CD4-positive, alpha-beta T cell (primary cell): ENCODE measurements at regions of chr6 and their contacts with region 1.

Region 1: GRCh38 chr6:108541838-108542759 is 18.6 kb upstream of the FOXO3 start:
- DNase-seq: peak; percentile 56 to 88 (median 61)
- ATAC-seq: peak; percentile 91
- H3K4me3 ChIP-seq: no peak overlapping the region
- H3K4me3 Mint-ChIP-seq: no peak overlapping the region
- H3K27ac ChIP-seq: no peak overlapping the region
- H3K27ac Mint-ChIP-seq: no peak overlapping the region
- H3K4me1 ChIP-seq: peaks cover 12% of the 10 kb centered on the region
- H3K4me1 Mint-ChIP-seq: peaks cover 7% of the 10 kb centered on the region
- H3K27me3 ChIP-seq: no peaks in the 10 kb centered on the region
- H3K27me3 Mint-ChIP-seq: peaks cover 5% of the 10 kb centered on the region
- CTCF ChIP-seq: peak; percentile 89

Region 2: GRCh38 chr6:108484016-108484415 is 58.1 kb before region 1 on chr6:
- CTCF ChIA-PET with region 1: no interaction called
- POLR2A ChIA-PET with region 1: no interaction called
- intact Hi-C with region 1: no loop called
- DNase-seq: no peak
- ATAC-seq: no peak
- H3K4me3 ChIP-seq: no peak overlapping the region
- H3K4me3 Mint-ChIP-seq: no peak overlapping the region
- H3K27ac ChIP-seq: no peak overlapping the region
- H3K27ac Mint-ChIP-seq: no peak overlapping the region
- H3K4me1 ChIP-seq: no peaks in the 10 kb centered on the region
- H3K4me1 Mint-ChIP-seq: no peaks in the 10 kb centered on the region
- H3K27me3 ChIP-seq: no peaks in the 10 kb centered on the region
- H3K27me3 Mint-ChIP-seq: no peaks in the 10 kb centered on the region
- CTCF ChIP-seq: no peak

Region 3: DNA sequence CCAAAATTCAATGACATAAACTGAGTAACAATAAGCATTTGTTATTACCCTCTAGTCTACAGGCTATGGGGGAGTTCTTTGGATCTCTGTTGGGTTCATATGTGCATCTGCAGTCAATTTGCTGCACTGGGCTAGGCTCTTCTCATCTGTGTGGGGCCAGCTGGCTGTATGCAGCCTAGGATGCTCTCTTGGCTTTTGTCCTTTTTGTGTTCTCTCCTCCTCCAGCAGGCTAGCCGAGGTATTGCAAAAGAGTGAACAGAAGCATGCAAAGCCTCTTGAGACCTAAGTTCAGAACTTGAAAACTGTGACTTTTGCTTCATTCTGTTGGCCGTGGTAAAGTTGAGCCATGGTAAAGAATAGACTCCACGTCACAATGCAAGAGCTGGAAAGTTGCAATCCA is 44.2 kb before region 1 on chr6:
- CTCF ChIA-PET with region 1: no interaction called
- POLR2A ChIA-PET with region 1: no interaction called
- intact Hi-C with region 1: no loop called
- DNase-seq: peak in 1 of 14 experiments; percentile 4
- ATAC-seq: no peak
- H3K4me3 ChIP-seq: no peak overlapping the region
- H3K4me3 Mint-ChIP-seq: no peak overlapping the region
- H3K27ac ChIP-seq: no peak overlapping the region
- H3K27ac Mint-ChIP-seq: no peak overlapping the region
- H3K4me1 ChIP-seq: no peaks in the 10 kb centered on the region
- H3K4me1 Mint-ChIP-seq: no peaks in the 10 kb centered on the region
- H3K27me3 ChIP-seq: no peaks in the 10 kb centered on the region
- H3K27me3 Mint-ChIP-seq: no peaks in the 10 kb centered on the region
- CTCF ChIP-seq: no peak

Region 4: DNA sequence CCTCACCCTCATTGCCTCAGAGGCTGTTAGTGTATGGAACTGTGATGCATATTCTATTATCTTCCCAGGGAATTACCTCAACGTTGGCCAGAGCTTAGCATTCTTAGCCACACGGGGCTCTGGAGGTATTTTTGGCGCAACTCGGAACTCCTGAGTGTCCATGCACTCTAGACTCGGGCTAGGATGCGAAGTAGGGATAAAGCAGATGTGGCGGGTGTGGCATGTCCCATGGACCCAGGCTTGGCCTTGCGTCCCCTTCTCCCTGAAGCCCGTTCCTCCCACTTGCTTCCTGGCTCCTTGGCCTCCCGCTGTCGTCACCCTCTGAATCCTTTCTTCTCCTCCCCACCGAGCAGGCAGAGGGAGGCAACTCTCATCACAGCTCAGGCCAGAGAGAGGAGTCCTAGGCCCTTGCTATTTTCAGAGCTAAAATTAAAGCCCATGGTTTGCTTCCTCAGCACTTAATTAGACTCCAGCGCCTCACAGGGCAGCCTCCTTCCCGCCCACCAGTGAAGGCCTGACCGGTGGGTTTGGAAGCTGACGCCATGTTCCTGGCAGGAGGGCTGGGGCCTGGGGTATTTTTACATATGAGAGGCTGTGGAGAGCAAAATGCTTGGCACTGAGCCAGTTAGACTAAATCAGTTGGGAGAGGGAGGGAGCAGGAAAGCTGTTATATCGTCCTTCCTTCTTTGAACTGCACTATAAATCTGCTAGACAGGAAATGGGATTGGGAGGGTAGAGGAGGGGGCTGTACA is 157.4 kb after region 1 on chr6:
- CTCF ChIA-PET with region 1: no interaction called
- POLR2A ChIA-PET with region 1: no interaction called
- intact Hi-C with region 1: no loop called
- DNase-seq: no peak
- ATAC-seq: no peak
- H3K4me3 ChIP-seq: no peak overlapping the region
- H3K4me3 Mint-ChIP-seq: no peak overlapping the region
- H3K27ac ChIP-seq: no peak overlapping the region
- H3K27ac Mint-ChIP-seq: no peak overlapping the region
- H3K4me1 ChIP-seq: no peaks in the 10 kb centered on the region
- H3K4me1 Mint-ChIP-seq: no peaks in the 10 kb centered on the region
- H3K27me3 ChIP-seq: no peaks in the 10 kb centered on the region
- H3K27me3 Mint-ChIP-seq: no peaks in the 10 kb centered on the region
- CTCF ChIP-seq: no peak

Region 5: DNA sequence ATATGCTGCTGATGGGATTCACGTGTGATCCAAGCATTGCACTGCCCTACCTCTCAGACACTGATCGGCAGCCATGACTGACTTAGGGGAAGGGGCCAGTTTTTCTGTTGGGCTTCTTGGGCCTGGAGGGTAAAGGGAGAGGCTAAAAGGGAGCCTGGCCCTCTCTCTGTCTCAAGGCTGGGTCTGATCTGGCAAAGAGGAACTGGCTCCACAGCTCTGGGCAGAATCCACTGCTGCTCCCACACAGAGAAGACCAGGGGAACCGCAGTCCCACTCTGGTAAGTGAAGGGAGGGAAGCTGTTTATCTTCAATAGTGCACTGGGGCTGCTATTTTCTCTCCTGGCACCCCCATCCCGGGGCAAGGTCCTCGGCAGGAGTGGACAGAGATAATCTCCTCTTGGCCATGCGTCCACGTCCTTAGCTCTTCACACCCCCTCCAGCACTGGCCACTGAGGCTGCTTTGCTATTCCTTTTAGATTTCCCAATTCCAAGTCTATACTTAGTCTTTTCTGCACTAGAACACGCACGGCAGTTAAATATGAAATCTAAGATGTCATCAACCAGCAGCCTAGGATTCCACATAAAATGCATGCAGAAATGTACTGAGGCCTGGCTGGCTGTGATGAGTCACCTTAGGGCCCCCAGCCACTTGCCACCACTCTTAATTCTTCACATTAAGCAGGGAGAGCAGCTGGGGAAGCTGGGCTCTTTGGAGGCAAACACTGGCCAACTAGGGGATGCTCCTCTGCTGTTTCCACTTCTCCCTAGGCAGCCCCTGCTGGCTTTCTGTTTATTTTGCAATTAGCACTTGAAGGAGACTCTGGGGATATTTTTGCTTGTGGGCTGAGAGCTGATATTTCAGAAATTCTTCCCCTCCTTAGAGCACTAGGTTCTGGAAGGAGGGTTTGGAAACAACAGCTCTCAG is 218.3 kb after region 1 on chr6:
- CTCF ChIA-PET with region 1: no interaction called
- POLR2A ChIA-PET with region 1: no interaction called
- intact Hi-C with region 1: no loop called
- DNase-seq: no peak
- ATAC-seq: no peak
- H3K4me3 ChIP-seq: no peak overlapping the region
- H3K4me3 Mint-ChIP-seq: no peak overlapping the region
- H3K27ac ChIP-seq: no peak overlapping the region
- H3K27ac Mint-ChIP-seq: no peak overlapping the region
- H3K4me1 ChIP-seq: no peaks in the 10 kb centered on the region
- H3K4me1 Mint-ChIP-seq: no peaks in the 10 kb centered on the region
- H3K27me3 ChIP-seq: no peaks in the 10 kb centered on the region
- H3K27me3 Mint-ChIP-seq: no peaks in the 10 kb centered on the region
- CTCF ChIP-seq: no peak

Region 6: GRCh38 chr6:108782179-108783041 is 240.3 kb after region 1 on chr6:
- CTCF ChIA-PET with region 1: interaction called, 6 read pairs
- POLR2A ChIA-PET with region 1: no interaction called
- intact Hi-C with region 1: loop called (anchors 1 kb)
- DNase-seq: peak; percentile 69 to 89 (median 75)
- ATAC-seq: peak; percentile 100
- H3K4me3 ChIP-seq: peak overlapping the region; percentile 45
- H3K4me3 Mint-ChIP-seq: peak overlapping the region; percentile 87
- H3K27ac ChIP-seq: no peak overlapping the region
- H3K27ac Mint-ChIP-seq: no peak overlapping the region
- H3K4me1 ChIP-seq: peaks cover 11% of the 10 kb centered on the region
- H3K4me1 Mint-ChIP-seq: peaks cover 11% of the 10 kb centered on the region
- H3K27me3 ChIP-seq: no peaks in the 10 kb centered on the region
- H3K27me3 Mint-ChIP-seq: no peaks in the 10 kb centered on the region
- CTCF ChIP-seq: peak; percentile 86

Region 7: GRCh38 chr6:108835218-108835850 is 293.2 kb after region 1 on chr6:
- CTCF ChIA-PET with region 1: interaction called, 4 read pairs
- POLR2A ChIA-PET with region 1: no interaction called
- intact Hi-C with region 1: loop called (anchors 1 kb)
- DNase-seq: peak; percentile 75 to 91 (median 82)
- ATAC-seq: peak; percentile 99
- H3K4me3 ChIP-seq: no peak overlapping the region
- H3K4me3 Mint-ChIP-seq: peak overlapping the region; percentile 42
- H3K27ac ChIP-seq: no peak overlapping the region
- H3K27ac Mint-ChIP-seq: no peak overlapping the region
- H3K4me1 ChIP-seq: peaks cover 13% of the 10 kb centered on the region
- H3K4me1 Mint-ChIP-seq: peaks cover 31% of the 10 kb centered on the region
- H3K27me3 ChIP-seq: no peaks in the 10 kb centered on the region
- H3K27me3 Mint-ChIP-seq: no peaks in the 10 kb centered on the region
- CTCF ChIP-seq: peak; percentile 91

Region 8: GRCh38 chr6:108896111-108896661 is 354.1 kb after region 1 on chr6:
- CTCF ChIA-PET with region 1: interaction called, 3 read pairs
- POLR2A ChIA-PET with region 1: interaction called, 3 read pairs
- intact Hi-C with region 1: loop called (anchors 1 to 2 kb)
- DNase-seq: peak in 3 of 14 experiments; percentile 70 to 87 (median 75)
- ATAC-seq: peak; percentile 69
- H3K4me3 ChIP-seq: no peak overlapping the region
- H3K4me3 Mint-ChIP-seq: peak overlapping the region; percentile 59
- H3K27ac ChIP-seq: peak overlapping the region in 1 of 2 donors; percentile 30
- H3K27ac Mint-ChIP-seq: peak overlapping the region; percentile 50
- H3K4me1 ChIP-seq: peaks cover 40% of the 10 kb centered on the region
- H3K4me1 Mint-ChIP-seq: peaks cover 36% of the 10 kb centered on the region
- H3K27me3 ChIP-seq: no peaks in the 10 kb centered on the region
- H3K27me3 Mint-ChIP-seq: no peaks in the 10 kb centered on the region
- CTCF ChIP-seq: no peak

Region 9: DNA sequence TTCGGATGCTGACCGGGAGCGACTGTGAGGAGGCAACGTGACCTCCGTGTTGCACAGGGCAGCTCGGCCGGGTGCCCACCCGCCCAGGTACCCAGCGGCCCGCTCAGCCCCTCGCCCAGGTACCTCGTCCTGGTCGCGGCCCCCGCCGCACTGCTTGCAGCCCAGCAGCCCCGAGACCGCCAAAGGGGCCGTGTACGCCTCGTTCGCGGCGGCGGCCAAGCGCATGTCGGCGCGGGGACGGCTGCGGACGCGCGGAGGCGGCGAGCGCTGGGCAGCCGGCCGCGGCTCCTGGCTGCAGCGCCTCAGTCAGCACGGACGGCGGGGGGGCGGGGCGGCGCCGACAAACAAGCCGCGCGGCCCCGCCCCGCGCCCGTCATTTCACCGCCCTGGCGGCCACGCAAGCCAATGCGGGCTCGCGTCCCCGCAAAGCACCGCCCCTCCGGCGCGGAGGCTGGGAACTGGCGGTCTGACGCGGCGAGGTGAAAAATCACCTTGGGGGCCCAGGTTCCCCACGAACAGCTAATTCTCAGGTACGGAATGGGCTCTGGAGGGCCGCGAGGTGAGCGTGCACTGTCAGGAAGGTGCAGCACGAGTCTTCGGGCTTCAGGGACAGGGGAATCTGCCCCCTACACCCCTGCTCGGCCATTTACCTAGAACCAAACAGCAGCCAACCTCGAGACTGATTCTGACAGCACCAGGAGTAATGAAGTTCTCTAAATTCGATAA is 467.3 kb after region 1 on chr6:
- CTCF ChIA-PET with region 1: interaction called, 3 read pairs
- POLR2A ChIA-PET with region 1: no interaction called
- intact Hi-C with region 1: loop called in 1 of 2 experiments (anchors 5 kb)
- DNase-seq: peak; percentile 81 to 97 (median 90)
- ATAC-seq: peak; percentile 94
- H3K4me3 ChIP-seq: peak overlapping the region; percentile 93
- H3K4me3 Mint-ChIP-seq: peak overlapping the region; percentile 100
- H3K27ac ChIP-seq: peak overlapping the region; percentile 84 to 92
- H3K27ac Mint-ChIP-seq: peak overlapping the region; percentile 99
- H3K4me1 ChIP-seq: peaks cover 18% of the 10 kb centered on the region
- H3K4me1 Mint-ChIP-seq: peaks cover 73% of the 10 kb centered on the region
- H3K27me3 ChIP-seq: no peaks in the 10 kb centered on the region
- H3K27me3 Mint-ChIP-seq: no peaks in the 10 kb centered on the region
- CTCF ChIP-seq: peak; percentile 14

Region 10: GRCh38 chr6:110389689-110390382 is 1847.7 kb after region 1 on chr6:
- CTCF ChIA-PET with region 1: no interaction called
- POLR2A ChIA-PET with region 1: no interaction called
- intact Hi-C with region 1: loop called in 1 of 2 experiments (anchors 5 kb)
- DNase-seq: no peak
- ATAC-seq: peak; percentile 23
- H3K4me3 ChIP-seq: no peak overlapping the region
- H3K4me3 Mint-ChIP-seq: no peak overlapping the region
- H3K27ac ChIP-seq: no peak overlapping the region
- H3K27ac Mint-ChIP-seq: peak overlapping the region; percentile 75
- H3K4me1 ChIP-seq: peaks cover 5% of the 10 kb centered on the region
- H3K4me1 Mint-ChIP-seq: peaks cover 27% of the 10 kb centered on the region
- H3K27me3 ChIP-seq: no peaks in the 10 kb centered on the region
- H3K27me3 Mint-ChIP-seq: no peaks in the 10 kb centered on the region
- CTCF ChIP-seq: no peak